ENCODE measurements at regions of chr9 and their contacts with region 1.

Region 1: GRCh38 chr9:36328798-36329411 is 70.7 kb upstream of the GNE start:
- DNase-seq: peak; percentile 75
- ATAC-seq: peak; percentile 57
- H3K4me3 Mint-ChIP-seq: no peak overlapping the region
- H3K27ac Mint-ChIP-seq: no peak overlapping the region
- H3K4me1 Mint-ChIP-seq: peaks cover 2% of the 10 kb centered on the region
- H3K27me3 Mint-ChIP-seq: no peaks in the 10 kb centered on the region

Region 2: GRCh38 chr9:36151316-36152210 is 177.3 kb before region 1 on chr9:
- CTCF ChIA-PET with region 1: no interaction called
- POLR2A ChIA-PET with region 1: no interaction called
- DNase-seq: peak; percentile 94
- ATAC-seq: peak; percentile 90
- H3K4me3 Mint-ChIP-seq: peak overlapping the region; percentile 74
- H3K27ac Mint-ChIP-seq: peak overlapping the region; percentile 97
- H3K4me1 Mint-ChIP-seq: peaks cover 70% of the 10 kb centered on the region
- H3K27me3 Mint-ChIP-seq: no peaks in the 10 kb centered on the region

Region 3: DNA sequence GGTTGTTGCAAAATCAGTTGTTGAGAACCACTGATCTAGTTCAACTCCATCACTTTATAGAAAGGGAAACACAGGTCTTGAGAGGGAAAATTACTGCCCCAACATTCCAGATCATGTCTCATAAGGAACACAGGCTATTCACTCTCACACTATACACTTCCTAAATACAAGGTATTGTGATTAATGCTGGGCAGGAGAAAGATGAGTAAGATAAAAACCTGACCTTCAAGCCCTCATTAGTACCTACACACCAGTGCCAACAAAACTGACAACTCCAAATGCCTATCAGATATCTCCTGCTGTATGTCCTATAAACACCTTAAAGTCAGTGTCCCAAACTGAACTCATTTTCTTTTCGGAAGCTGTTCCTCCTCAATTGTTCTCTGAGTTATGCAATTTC is 78.8 kb before region 1 on chr9:
- CTCF ChIA-PET with region 1: interaction called, 57 read pairs
- POLR2A ChIA-PET with region 1: interaction called, 5 read pairs
- DNase-seq: no peak
- ATAC-seq: no peak
- H3K4me3 Mint-ChIP-seq: no peak overlapping the region
- H3K27ac Mint-ChIP-seq: no peak overlapping the region
- H3K4me1 Mint-ChIP-seq: peaks cover 4% of the 10 kb centered on the region
- H3K27me3 Mint-ChIP-seq: no peaks in the 10 kb centered on the region

Region 4: GRCh38 chr9:36258208-36258988 is 70.5 kb before region 1 on chr9 and contains the start of gene GNE:
- CTCF ChIA-PET with region 1: interaction called, 10 read pairs
- POLR2A ChIA-PET with region 1: no interaction called
- DNase-seq: peak; percentile 98
- ATAC-seq: peak; percentile 87
- H3K4me3 Mint-ChIP-seq: peak within 1 kb of the TSS; percentile 97
- H3K27ac Mint-ChIP-seq: peak within 1 kb of the TSS; percentile 96
- H3K4me1 Mint-ChIP-seq: peaks cover 15% of the 10 kb centered on the region
- H3K27me3 Mint-ChIP-seq: no peaks in the 10 kb centered on the region
- total RNA-seq, gene GNE: 15.2 to 16.1 TPM

Region 5: DNA sequence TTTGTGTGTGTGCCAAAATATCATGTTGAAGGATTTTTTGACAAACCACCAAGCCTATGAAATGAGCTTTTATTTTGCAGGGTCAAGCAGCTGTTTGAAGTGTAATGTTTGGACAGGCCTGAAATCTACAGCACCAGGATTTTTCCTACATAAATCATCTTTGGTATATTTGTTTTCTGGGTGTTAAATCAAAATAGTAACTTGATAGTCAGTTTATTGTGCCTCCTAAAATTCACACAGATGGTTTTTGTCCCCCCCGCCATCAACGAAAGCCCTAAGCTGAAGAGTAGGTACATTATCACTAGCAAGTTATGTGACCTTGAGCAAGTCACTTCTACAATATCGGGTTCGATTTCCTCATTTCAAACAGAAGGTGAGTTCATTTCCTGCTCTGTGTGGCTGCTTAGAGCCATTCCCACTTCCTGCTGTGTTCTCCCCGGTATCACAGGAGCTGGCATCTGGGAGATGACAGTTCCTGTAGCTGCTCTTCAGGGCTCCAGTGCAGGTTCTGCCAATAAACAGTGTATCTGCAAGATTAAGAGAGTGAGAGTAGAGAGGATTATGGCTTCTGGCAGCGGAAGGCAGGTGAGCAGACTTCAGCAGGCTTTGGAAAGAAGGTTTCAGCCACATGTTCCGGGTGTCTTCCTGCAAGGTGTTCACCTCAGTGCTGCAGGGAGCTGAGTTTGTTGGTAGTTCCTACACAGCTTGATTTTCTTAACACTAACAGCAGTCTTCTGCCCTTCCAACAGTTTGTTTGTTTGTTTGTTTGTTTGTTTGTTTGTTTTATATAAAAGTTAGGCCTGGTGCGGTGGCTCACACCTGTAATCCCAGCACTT is 22.2 kb before region 1 on chr9:
- CTCF ChIA-PET with region 1: interaction called, 12 read pairs
- POLR2A ChIA-PET with region 1: no interaction called
- DNase-seq: peak; percentile 27
- ATAC-seq: peak; percentile 57
- H3K4me3 Mint-ChIP-seq: peak overlapping the region; percentile 27
- H3K27ac Mint-ChIP-seq: peak overlapping the region; percentile 77
- H3K4me1 Mint-ChIP-seq: peaks cover 11% of the 10 kb centered on the region
- H3K27me3 Mint-ChIP-seq: no peaks in the 10 kb centered on the region

Region 6: GRCh38 chr9:36392489-36392888 is 63.6 kb after region 1 on chr9:
- CTCF ChIA-PET with region 1: no interaction called
- POLR2A ChIA-PET with region 1: no interaction called
- DNase-seq: no peak
- ATAC-seq: no peak
- H3K4me3 Mint-ChIP-seq: no peak overlapping the region
- H3K27ac Mint-ChIP-seq: no peak overlapping the region
- H3K4me1 Mint-ChIP-seq: peaks cover 50% of the 10 kb centered on the region
- H3K27me3 Mint-ChIP-seq: no peaks in the 10 kb centered on the region